Activated B cell treated with CpG ODN at 0.5 μM for 24 hours (primary cell): ENCODE measurements at regions of chr13 and their contacts with region 1.

Region 1: GRCh38 chr13:27953676-27954405 is 15.3 kb downstream of the CDX2 start:
- DNase-seq: peak; percentile 73
- ATAC-seq: peak; percentile 92
- H3K4me3 Mint-ChIP-seq: peak overlapping the region; percentile 77
- H3K27ac Mint-ChIP-seq: peak overlapping the region; percentile 30
- H3K4me1 Mint-ChIP-seq: peaks cover 15% of the 10 kb centered on the region
- H3K27me3 Mint-ChIP-seq: peaks cover 61% of the 10 kb centered on the region
- CTCF ChIP-seq: no peak

Region 2: DNA sequence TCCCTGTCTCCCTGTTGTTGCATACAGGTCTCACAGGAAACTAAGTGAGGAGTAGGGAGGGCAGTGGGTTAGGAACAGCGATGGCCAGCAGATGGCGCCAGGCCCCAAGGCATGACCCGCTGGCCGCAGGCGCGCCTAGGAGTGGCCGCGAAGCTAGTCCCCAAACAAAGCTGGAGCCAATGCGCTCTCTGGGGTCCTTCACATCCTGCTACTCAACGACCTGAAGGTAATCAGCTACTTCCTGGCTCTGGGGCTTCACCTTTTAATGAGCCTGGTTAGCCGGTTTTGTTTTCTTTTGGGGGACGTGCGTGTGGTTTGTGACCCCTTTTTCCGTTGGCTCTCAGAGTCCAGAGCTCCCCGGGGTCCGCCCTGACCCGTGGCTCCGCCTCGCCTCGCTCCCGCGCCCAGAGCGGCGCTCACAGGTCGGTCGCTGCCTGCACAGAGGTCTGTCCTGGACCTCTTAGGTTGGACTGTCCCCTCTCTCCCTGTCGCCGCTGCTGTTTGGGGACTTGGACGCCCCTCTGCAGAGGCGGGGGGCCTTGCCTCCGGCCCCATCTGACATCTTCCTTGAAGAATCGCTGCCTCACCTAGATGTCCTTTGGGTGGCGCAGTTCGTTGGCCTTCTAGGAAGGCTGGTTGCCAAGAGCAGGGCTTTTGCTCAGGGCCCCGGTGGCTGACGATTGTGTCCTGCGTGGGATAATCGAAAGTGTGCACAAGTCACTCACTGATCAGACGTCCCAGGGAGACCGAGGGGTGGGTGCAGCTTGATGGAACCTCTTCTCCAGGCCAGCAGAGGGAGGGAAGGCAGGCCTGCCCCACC is 591.6 kb before region 1 on chr13:
- CTCF ChIA-PET with region 1: interaction called, 14 read pairs
- POLR2A ChIA-PET with region 1: no interaction called
- intact Hi-C with region 1: no loop called
- DNase-seq: peak; percentile 73
- ATAC-seq: peak; percentile 92
- H3K4me3 Mint-ChIP-seq: peak overlapping the region; percentile 35
- H3K27ac Mint-ChIP-seq: no peak overlapping the region
- H3K4me1 Mint-ChIP-seq: peaks cover 9% of the 10 kb centered on the region
- H3K27me3 Mint-ChIP-seq: peaks cover 11% of the 10 kb centered on the region
- CTCF ChIP-seq: peak; percentile 65

Region 3: GRCh38 chr13:27374650-27375049 is 579.2 kb before region 1 on chr13:
- CTCF ChIA-PET with region 1: interaction called, 11 read pairs
- POLR2A ChIA-PET with region 1: no interaction called
- intact Hi-C with region 1: loop called (anchors 1 kb)
- DNase-seq: no peak
- ATAC-seq: peak; percentile 88
- H3K4me3 Mint-ChIP-seq: no peak overlapping the region
- H3K27ac Mint-ChIP-seq: no peak overlapping the region
- H3K4me1 Mint-ChIP-seq: peaks cover 2% of the 10 kb centered on the region
- H3K27me3 Mint-ChIP-seq: peaks cover 22% of the 10 kb centered on the region
- CTCF ChIP-seq: peak; percentile 75

Region 4: DNA sequence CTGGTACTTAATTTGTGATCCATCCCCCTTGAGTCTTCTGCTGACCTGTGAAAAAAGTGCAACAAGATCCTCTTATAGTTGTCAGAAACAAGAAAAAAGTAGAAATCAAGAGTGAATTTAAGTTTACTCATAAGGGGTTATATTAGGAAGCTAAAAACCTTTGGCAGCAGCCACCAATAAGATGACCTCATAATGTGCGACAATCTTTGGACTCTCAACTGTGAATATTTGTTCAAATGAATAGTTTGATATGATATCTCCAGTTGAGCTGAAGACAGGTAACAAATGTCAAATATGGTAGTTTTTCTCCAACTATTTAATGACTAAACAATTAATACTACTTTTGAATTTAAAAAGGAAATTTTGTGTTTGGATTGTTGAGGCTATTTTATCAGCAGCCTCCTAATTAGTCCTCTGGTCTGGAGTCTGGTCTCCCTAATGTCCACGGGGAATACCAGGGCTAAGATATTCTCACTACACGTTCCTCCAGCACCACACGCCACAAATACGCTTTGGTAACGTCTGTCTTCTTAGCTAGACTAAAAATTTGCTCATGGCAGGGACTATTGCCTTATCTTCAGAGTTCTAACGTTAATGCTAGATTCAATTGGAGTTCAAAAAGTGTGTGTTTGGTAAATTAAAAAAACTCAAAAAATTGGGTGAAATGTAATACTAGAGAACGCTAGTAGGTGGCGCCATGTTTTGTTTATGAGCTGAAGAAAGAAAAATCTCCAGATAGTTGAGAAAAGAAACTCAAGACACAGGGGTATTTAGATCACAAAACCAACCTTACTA is 85.0 kb before region 1 on chr13:
- CTCF ChIA-PET with region 1: interaction called, 15 read pairs
- POLR2A ChIA-PET with region 1: no interaction called
- intact Hi-C with region 1: loop called (anchors 1 kb)
- DNase-seq: no peak
- ATAC-seq: no peak
- H3K4me3 Mint-ChIP-seq: no peak overlapping the region
- H3K27ac Mint-ChIP-seq: no peak overlapping the region
- H3K4me1 Mint-ChIP-seq: no peaks in the 10 kb centered on the region
- H3K27me3 Mint-ChIP-seq: peaks cover 27% of the 10 kb centered on the region
- CTCF ChIP-seq: no peak

Region 5: DNA sequence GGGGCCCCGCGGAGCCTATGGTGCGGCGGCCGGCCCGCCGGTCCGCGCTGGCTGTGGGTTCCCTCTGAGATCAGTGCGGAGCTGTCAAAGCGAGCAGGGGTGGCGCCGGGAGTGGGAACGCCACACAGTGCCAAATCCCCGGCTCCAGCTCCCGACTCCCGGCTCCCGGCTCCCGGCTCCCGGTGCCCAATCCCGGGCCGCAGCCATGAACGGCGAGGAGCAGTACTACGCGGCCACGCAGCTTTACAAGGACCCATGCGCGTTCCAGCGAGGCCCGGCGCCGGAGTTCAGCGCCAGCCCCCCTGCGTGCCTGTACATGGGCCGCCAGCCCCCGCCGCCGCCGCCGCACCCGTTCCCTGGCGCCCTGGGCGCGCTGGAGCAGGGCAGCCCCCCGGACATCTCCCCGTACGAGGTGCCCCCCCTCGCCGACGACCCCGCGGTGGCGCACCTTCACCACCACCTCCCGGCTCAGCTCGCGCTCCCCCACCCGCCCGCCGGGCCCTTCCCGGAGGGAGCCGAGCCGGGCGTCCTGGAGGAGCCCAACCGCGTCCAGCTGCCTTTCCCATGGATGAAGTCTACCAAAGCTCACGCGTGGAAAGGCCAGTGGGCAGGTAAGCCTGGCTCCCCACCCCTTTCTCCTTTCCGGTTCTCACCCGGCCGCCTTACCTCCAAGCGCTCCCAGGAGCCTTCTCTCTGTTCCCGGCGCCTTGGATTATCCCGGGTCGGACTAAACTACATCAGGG is 33.7 kb before region 1 on chr13 and contains the start of gene PDX1:
- CTCF ChIA-PET with region 1: interaction called, 6 read pairs
- POLR2A ChIA-PET with region 1: no interaction called
- intact Hi-C with region 1: loop called (anchors 1 kb)
- DNase-seq: no peak
- ATAC-seq: peak; percentile 71
- H3K4me3 Mint-ChIP-seq: peak within 1 kb of the TSS; percentile 71
- H3K27ac Mint-ChIP-seq: peak within 1 kb of the TSS; percentile 46
- H3K4me1 Mint-ChIP-seq: peaks cover 41% of the 10 kb centered on the region
- H3K27me3 Mint-ChIP-seq: peaks cover 64% of the 10 kb centered on the region
- CTCF ChIP-seq: no peak
- total RNA-seq, gene PDX1: not detected in 2 replicates

Region 6: DNA sequence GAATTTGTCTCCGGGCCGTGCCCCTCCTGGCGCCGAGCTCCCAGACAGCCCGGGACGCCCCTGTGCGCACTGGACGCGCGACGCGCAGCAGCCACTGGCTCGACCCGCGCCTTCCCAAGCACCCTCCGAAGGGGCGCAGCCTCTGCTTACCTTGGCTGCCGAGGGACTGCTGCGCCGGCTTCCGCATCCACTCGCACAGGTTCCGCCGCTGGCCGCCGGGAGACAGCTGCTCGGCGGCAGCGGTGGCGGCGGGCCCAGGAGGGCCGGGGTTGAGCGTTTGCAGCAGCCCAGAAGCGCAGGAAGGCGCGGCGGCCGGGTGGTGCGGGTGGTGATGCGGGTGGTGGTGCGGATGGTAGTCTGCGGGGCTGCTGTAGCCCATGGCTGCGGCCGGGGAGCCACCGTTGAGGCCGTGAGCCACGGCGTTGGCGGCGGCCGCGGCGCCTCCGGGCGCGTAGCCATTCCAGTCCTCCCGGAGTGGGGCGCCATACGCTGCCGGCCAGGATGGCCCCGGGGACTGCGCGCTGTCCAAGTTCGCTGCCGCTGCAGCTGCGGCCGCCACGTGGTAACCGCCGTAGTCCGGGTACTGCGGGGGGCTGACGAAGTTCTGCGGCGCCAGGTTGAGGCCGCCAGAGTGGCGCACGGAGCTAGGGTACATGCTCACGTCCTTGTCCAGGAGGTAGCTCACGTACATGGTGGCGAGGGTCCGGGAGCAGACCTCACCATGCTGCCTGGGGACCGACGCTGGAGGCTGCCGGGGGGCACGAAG is 14.7 kb after region 1 on chr13:
- CTCF ChIA-PET with region 1: interaction called, 10 read pairs
- POLR2A ChIA-PET with region 1: no interaction called
- intact Hi-C with region 1: loop called (anchors 2 kb)
- DNase-seq: no peak
- ATAC-seq: no peak
- H3K4me3 Mint-ChIP-seq: peak overlapping the region; percentile 28
- H3K27ac Mint-ChIP-seq: no peak overlapping the region
- H3K4me1 Mint-ChIP-seq: peaks cover 36% of the 10 kb centered on the region
- H3K27me3 Mint-ChIP-seq: peaks cover 70% of the 10 kb centered on the region
- CTCF ChIP-seq: no peak

Region 7: DNA sequence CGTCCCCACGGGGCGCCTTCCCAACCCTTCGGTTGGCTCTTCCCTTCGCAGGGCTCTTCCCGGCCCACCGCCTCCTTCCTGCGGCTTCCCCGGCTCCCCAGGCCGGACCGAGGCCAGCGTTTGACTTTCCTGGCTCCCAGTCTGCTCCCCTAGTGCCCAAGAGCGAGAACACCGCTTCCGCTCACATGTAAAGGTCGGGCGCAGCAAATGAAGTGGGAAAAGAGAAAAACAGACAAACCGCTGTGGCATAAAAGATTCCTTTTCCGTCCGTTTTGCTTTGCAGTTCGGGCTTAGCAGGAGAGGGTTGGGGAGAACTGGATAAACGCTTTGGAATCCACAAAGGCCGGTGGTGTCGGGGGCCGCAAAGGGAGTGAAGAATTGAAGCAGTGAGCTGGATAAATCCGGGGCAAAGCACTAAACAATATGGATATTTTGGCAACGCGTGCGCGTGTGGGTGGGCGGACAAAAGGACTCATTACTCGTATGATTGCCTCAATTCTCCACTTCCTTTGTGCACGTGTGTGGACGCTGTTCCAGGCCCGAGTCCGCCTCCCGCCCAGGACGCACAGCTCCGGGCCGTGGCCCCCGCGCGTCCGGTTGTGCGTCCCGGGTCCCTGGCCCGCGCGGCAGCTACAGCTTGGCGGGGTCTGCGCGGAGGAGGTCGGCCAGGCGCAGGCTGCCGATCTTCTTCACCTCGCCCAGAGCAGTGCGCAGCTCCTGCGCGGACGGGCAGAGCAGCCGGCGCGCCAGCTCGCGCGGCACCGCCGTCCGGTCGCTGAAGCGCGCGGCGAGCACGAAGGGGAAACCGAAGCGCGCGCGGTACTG is 23.8 kb after region 1 on chr13:
- CTCF ChIA-PET with region 1: interaction called, 3 read pairs
- POLR2A ChIA-PET with region 1: no interaction called
- intact Hi-C with region 1: loop called (anchors 2 kb)
- DNase-seq: no peak
- ATAC-seq: no peak
- H3K4me3 Mint-ChIP-seq: no peak overlapping the region
- H3K27ac Mint-ChIP-seq: no peak overlapping the region
- H3K4me1 Mint-ChIP-seq: peaks cover 36% of the 10 kb centered on the region
- H3K27me3 Mint-ChIP-seq: peaks cover 79% of the 10 kb centered on the region
- CTCF ChIP-seq: no peak